ENCODE measurements at regions of chr7 and their contacts with region 1.

Region 1: GRCh38 chr7:21427182-21427870 is 557 bp upstream of the SP4 start:
- DNase-seq: peak; percentile 91 to 98 (median 94)
- ATAC-seq: peak; percentile 87
- H3K4me3 ChIP-seq: peak overlapping the region; percentile 87
- H3K27ac ChIP-seq: peak overlapping the region; percentile 99
- H3K4me1 ChIP-seq: peaks cover 25 to 31% of the 10 kb centered on the region in 2 experiments
- H3K27me3 ChIP-seq: no peaks in the 10 kb centered on the region
- CTCF ChIP-seq: peak in 1 of 3 experiments; percentile 5; a peak in 1 of 6 replicates
- EP300 ChIP-seq: peak; percentile 3; the same call in 1 of the 2 replicates
- POLR2A ChIP-seq: peak; percentile 95
- RAD21 ChIP-seq: no peak; a peak in 1 of 4 replicates

Region 2: DNA sequence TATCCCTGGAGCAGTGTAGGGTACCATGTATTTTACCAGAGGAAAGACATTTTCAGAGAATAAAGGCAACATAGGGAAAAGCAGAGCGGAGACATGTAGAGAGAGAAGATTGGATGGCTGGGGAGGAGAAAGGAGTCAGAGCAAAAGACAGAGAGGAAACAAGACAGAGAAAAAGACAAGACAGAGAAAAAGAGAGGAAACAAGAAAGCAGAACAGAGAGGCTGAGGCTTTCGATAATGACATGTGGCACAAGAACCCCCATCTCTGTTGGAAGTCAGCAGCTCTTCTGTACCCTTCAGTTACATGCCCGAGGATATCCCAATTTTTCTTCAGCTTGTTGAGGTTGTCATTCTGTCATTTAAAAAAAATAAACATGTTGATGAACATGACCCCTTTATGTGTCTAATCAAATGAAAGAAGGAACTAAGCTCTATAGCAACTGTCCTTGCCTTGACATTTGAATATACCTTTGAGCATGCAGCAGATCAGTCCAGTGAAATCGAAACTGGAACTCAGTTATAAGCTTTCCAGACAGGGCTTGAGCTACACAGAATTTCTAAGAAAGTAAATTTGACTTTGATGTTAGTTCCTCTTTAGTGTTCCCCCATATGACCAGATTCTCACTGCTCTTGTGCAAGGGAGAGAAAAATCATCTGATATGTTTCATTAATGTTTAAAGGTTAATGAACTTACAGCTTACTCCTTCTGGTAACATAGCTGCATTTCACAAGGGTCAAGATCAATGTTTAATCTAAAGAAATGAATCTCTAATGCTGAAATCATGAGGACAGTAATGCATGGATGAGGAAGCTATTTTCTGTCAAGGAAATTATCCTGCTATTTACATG is 74.6 kb before region 1 on chr7:
- CTCF ChIA-PET with region 1: no interaction called
- POLR2A ChIA-PET with region 1: interaction called, 3 read pairs
- in situ Hi-C with region 1: no loop called
- intact Hi-C with region 1: loop called (anchors 5 kb)
- DNase-seq: no peak
- ATAC-seq: 0 out of 3 replicates have a peak, but pooled peaks have one; percentile 9
- H3K4me3 ChIP-seq: no peak overlapping the region
- H3K27ac ChIP-seq: no peak overlapping the region
- H3K4me1 ChIP-seq: peaks cover 5 to 24% of the 10 kb centered on the region in 2 experiments; a peak in 3 of 5 replicates
- H3K27me3 ChIP-seq: no peaks in the 10 kb centered on the region
- CTCF ChIP-seq: no peak
- EP300 ChIP-seq: no peak
- POLR2A ChIP-seq: no peak
- RAD21 ChIP-seq: no peak

Region 3: GRCh38 chr7:21412410-21412851 is 14.9 kb before region 1 on chr7:
- CTCF ChIA-PET with region 1: no interaction called
- POLR2A ChIA-PET with region 1: interaction called, 11 read pairs
- in situ Hi-C with region 1: no loop called
- intact Hi-C with region 1: no loop called
- DNase-seq: peak in 2 of 4 experiments; percentile 15 to 20
- ATAC-seq: peak; percentile 28; the same call in 2 of the 3 replicates
- H3K4me3 ChIP-seq: no peak overlapping the region
- H3K27ac ChIP-seq: no peak overlapping the region
- H3K4me1 ChIP-seq: peaks cover 0 to 26% of the 10 kb centered on the region in 2 experiments; a peak in 3 of 5 replicates
- H3K27me3 ChIP-seq: peaks cover 0 to 11% of the 10 kb centered on the region in 2 experiments; a peak in 2 of 5 replicates
- CTCF ChIP-seq: no peak
- EP300 ChIP-seq: no peak
- POLR2A ChIP-seq: no peak
- RAD21 ChIP-seq: no peak